ENCODE measurements at regions of chr16 and their contacts with region 1.

Region 1: DNA sequence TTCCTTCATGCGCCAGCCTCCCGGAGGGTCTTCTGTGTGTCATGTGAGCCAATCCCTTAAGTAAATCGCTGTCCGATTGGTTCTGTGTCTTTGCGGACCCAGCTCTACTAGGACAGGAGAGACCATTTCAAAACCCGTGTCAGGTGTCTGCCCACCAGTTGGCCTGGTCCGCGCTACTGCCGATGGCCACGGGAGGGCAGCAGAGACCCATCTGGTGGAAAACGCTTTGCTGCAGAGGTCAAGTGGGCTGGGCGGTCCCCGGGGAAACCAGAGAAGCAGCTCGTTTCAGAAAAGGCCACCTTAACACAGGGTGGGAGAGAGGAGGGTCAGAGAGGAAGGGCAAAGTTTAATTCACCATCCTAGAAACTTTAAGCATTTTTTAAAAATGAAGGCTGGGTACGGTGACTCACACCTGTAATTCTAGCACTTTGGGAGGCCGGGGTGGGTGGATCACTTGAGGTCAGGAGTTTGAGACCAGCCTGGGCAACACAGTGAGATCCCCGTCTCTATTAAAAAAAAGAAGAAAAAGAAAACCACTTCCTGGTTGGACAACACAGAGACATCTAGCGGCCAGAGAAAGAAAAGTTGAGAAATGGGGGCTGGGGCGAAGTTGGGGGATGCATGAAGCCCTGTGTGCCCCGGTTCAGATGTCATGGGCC is 2.8 kb upstream of the CIBAR2 start:
- DNase-seq: peak; percentile 84 to 86
- ATAC-seq: peak; percentile 91 to 94 (median 94)
- H3K4me3 ChIP-seq: no peak overlapping the region
- H3K4me3 Mint-ChIP-seq: peak overlapping the region; percentile 77
- H3K27ac ChIP-seq: peak overlapping the region; percentile 47
- H3K27ac Mint-ChIP-seq: peak overlapping the region; percentile 88 to 89
- H3K4me1 ChIP-seq: peaks cover 27% of the 10 kb centered on the region
- H3K4me1 Mint-ChIP-seq: peaks cover 18 to 42% of the 10 kb centered on the region in 2 donors
- H3K27me3 ChIP-seq: no peaks in the 10 kb centered on the region
- H3K27me3 Mint-ChIP-seq: no peaks in the 10 kb centered on the region
- CTCF ChIP-seq: peak; percentile 85

Region 2: GRCh38 chr16:85428168-85428898 is 313.3 kb after region 1 on chr16:
- intact Hi-C with region 1: loop called (anchors 5 kb)
- DNase-seq: peak; percentile 48 to 70
- ATAC-seq: peak; percentile 34 to 97 (median 83)
- H3K4me3 ChIP-seq: no peak overlapping the region
- H3K4me3 Mint-ChIP-seq: no peak overlapping the region
- H3K27ac ChIP-seq: no peak overlapping the region
- H3K27ac Mint-ChIP-seq: no peak overlapping the region
- H3K4me1 ChIP-seq: no peaks in the 10 kb centered on the region
- H3K4me1 Mint-ChIP-seq: no peaks in the 10 kb centered on the region
- H3K27me3 ChIP-seq: no peaks in the 10 kb centered on the region
- H3K27me3 Mint-ChIP-seq: peaks cover 0 to 20% of the 10 kb centered on the region in 2 donors
- CTCF ChIP-seq: peak; percentile 70

Region 3: GRCh38 chr16:85473909-85474620 is 359.0 kb after region 1 on chr16:
- intact Hi-C with region 1: no loop called
- DNase-seq: no peak
- ATAC-seq: no peak
- H3K4me3 ChIP-seq: no peak overlapping the region
- H3K4me3 Mint-ChIP-seq: no peak overlapping the region
- H3K27ac ChIP-seq: no peak overlapping the region
- H3K27ac Mint-ChIP-seq: no peak overlapping the region
- H3K4me1 ChIP-seq: no peaks in the 10 kb centered on the region
- H3K4me1 Mint-ChIP-seq: no peaks in the 10 kb centered on the region
- H3K27me3 ChIP-seq: no peaks in the 10 kb centered on the region
- H3K27me3 Mint-ChIP-seq: peaks cover 7 to 17% of the 10 kb centered on the region in 2 donors
- CTCF ChIP-seq: no peak